Lower leg skin (tissue), 4 donors: ENCODE measurements at regions of chr12 and their contacts with region 1.

Region 1: DNA sequence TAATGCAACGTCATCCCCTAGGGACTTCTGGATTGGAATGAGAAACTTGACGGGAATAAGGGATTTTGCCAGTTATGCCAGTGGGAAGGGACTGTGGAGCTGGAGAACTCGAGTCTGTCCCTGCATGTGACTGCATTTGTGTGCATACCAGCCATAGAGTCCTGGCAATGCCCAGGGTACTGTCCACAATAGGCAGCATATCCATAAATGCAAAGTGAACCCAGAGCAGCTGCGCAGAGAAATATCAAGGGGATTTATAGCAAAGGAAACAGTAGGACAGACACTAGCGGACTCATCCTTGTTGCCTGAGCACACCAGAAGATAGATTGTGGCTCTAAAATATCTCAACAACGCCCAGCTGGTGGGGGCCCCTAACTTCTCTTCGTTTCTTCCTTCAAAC is 247.1 kb upstream of the SRRM4 start:
- DNase-seq: no peak
- H3K4me3 ChIP-seq: no peak overlapping the region
- CTCF ChIP-seq: no peak
- POLR2A ChIP-seq: no peak

Region 2: GRCh38 chr12:118790578-118790977 is 56.3 kb after region 1 on chr12:
- intact Hi-C with region 1: loop called (anchors 2 kb)
- DNase-seq: no peak
- H3K4me3 ChIP-seq: no peak overlapping the region
- CTCF ChIP-seq: no peak
- POLR2A ChIP-seq: no peak

Region 3: GRCh38 chr12:118874698-118875548 is 140.7 kb after region 1 on chr12:
- intact Hi-C with region 1: no loop called
- DNase-seq: no peak
- H3K4me3 ChIP-seq: no peak overlapping the region
- CTCF ChIP-seq: no peak
- POLR2A ChIP-seq: no peak